ENCODE measurements at regions of chr1 and their contacts with region 1.

Region 1: DNA sequence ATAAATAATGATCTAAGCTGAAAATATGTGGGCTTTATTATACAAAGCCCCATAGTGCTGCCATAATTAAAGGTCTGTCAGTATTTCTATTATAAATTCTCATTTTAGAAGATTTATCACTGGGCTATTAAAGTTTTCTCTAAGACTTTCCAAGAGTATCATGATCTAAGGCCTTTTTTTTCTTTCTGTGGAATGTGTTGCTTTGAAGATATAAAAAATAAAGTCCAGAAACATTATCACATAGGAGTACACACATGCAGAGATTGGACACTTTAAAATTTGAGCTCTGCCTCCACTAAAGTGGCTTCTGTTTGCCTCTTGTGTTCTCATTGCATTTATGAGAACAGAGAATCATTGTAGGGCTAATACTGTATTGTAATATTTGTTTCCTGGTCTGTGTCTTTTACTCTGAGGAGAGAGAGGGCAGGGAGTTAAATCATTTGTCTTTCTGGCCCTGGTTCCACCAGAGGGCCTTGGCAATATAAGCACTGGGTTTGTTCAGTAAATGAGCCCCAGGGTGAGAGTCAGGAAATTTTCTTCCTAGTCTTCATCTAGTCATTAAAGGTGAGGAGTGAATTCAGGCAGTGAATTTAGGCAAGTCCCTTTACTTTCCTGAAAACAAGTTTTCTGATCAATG is 70.2 kb downstream of the NFIA start:
- DNase-seq: no peak
- ATAC-seq: peak; percentile 29

Region 2: DNA sequence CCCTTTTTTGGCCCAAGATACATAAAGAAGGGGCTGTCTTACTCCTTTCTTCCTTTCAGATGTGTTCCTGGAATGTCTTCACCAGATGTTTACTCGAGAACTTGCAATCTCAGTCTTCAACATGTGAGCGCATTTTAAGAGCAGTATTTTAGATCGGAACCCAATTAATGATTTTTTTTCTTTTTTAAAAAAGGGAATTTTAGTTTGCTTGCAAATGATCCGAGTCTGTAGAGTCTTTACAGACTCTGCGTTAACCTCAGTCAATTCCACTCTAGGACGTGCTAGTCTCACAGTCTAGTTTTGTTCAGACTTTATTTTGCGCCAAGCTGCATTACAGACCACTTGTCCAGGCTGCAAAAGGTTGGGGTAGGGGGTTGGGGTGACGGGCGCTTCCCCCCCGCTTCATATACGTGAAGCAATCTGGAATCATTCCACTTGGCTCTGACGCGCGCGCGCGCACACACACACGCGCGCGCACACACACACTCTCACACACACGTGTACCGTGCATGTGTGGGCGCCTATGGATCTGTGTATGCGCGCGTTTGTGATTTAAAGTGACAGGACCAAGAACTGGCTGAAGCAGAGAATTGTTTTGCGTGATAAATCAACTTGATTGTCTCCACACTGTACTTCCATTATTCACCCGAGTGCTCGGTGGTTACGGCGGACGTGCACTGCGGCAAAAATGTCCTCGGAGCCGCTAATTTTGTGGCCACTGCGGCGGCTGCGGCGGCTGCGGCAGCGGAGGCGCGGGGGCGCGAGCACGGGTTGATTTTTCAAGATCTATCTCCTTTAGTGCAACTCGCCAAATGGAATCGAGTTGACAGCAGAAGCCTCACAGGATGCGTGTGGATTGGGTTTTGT is 95.8 kb before region 1 on chr1:
- intact Hi-C with region 1: no loop called
- DNase-seq: peak; percentile 80
- ATAC-seq: peak; percentile 66

Region 3: GRCh38 chr1:61097317-61097716 is 55.3 kb before region 1 on chr1:
- intact Hi-C with region 1: no loop called
- DNase-seq: no peak
- ATAC-seq: no peak

Region 4: DNA sequence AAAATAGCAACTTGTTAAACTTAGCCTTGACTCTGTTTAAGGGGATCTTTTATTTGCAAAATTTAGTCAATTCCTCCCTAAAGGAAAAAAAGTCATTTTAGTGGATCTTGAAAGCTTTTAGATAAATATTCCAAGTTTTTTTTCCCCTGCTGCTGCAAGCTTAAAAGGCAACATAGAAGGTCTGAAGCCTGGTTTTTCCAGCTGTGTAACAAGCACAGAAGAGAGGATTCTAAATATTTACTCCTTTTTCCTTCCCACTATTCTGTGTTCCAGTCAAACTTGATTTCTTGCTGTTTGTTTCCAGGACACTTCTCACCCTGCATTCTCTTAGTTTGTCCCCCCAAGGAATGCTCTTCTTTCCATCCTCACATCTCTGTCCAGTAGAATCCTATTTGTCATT is 16.5 kb after region 1 on chr1:
- intact Hi-C with region 1: loop called (anchors 2 kb)
- DNase-seq: no peak
- ATAC-seq: no peak

Region 5: DNA sequence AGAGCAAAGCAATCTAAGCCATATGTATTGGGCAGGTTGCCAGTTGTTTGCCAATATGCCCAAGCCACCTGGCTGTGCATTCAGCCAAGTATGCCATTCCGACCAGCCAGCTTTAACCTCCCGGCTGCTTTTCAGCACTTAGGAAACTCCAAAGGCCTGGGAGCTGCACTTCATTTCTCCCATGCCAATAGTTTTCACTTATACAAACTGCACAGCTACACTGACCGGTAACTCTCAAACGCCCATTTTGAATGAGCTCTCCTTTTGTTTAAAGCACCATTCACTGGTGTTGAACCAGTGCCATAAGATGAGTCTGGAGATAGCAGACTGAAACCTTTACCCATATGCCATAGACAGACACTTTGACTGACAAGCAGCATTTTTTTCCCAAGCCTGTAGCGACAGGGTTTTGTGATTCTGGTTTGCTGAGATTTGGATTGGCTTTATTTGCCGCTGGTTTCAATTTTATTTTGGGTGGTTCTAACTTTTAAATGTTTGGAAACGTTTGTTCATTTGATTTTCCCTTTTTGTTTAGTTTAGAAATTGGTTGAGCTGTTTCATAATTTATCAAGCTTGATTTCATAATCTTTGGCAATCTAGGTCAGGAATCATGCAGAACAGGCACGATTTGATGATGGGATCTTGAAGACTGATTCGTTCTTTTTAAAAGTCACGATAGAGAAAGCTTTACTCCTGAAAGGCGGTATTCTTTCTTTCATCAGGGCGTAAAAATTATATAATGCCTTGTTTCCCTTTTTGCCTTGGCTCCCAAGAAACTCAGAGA is 74.4 kb after region 1 on chr1:
- intact Hi-C with region 1: no loop called
- DNase-seq: no peak
- ATAC-seq: peak; percentile 76